PC-9 (cell line): ENCODE measurements at regions of chr5 and their contacts with region 1.

Region 1: DNA sequence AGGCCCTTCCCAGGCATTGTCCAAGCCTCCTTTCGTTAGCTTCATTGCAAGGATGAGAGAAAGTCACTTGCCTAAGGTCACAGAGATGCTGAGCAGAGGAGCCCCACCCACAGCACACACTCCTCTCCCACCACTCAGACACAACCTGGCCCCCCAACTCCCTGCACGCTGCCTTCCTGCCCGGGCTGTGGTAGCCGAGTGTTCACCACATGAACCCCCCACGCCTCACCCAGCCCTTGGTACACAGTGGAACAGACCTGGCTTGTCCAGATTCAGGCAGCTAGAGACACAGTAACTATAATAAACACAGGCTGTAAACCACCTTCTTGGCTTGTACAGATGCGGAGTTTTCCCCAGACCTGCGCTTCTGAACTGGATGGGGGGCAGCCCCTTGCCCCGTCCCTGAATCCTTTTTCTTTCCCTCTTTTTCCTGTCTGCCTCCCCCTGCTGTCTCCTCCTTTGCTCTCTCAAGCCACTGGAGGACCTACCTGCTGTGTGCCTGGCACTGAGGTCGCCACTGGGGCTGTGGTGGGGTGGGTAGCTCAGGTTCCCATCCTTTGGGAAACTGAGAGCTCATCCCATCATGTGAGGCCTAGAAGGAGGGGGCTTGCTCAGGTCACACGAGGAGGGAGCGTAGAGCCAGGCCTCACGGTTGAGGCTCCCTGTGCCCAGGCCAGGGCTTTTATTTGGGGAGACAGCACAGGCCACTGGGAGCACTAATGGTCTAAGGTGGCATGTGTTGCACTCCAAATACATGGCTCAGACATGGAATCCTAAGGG is 55.7 kb upstream of the SYNPO start:
- DNase-seq: no peak
- H3K4me3 ChIP-seq: no peak overlapping the region
- H3K27ac ChIP-seq: no peak overlapping the region
- H3K4me1 ChIP-seq: no peaks in the 10 kb centered on the region
- H3K27me3 ChIP-seq: peaks cover 14% of the 10 kb centered on the region
- CTCF ChIP-seq: no peak

Region 2: GRCh38 chr5:150599917-150600499 is 15.3 kb after region 1 on chr5:
- CTCF ChIA-PET with region 1: no interaction called
- POLR2A ChIA-PET with region 1: no interaction called
- intact Hi-C with region 1: no loop called
- DNase-seq: peak in 1 of 2 experiments; percentile 69
- H3K4me3 ChIP-seq: no peak overlapping the region
- H3K27ac ChIP-seq: no peak overlapping the region
- H3K4me1 ChIP-seq: no peaks in the 10 kb centered on the region
- H3K27me3 ChIP-seq: no peaks in the 10 kb centered on the region
- CTCF ChIP-seq: no peak

Region 3: DNA sequence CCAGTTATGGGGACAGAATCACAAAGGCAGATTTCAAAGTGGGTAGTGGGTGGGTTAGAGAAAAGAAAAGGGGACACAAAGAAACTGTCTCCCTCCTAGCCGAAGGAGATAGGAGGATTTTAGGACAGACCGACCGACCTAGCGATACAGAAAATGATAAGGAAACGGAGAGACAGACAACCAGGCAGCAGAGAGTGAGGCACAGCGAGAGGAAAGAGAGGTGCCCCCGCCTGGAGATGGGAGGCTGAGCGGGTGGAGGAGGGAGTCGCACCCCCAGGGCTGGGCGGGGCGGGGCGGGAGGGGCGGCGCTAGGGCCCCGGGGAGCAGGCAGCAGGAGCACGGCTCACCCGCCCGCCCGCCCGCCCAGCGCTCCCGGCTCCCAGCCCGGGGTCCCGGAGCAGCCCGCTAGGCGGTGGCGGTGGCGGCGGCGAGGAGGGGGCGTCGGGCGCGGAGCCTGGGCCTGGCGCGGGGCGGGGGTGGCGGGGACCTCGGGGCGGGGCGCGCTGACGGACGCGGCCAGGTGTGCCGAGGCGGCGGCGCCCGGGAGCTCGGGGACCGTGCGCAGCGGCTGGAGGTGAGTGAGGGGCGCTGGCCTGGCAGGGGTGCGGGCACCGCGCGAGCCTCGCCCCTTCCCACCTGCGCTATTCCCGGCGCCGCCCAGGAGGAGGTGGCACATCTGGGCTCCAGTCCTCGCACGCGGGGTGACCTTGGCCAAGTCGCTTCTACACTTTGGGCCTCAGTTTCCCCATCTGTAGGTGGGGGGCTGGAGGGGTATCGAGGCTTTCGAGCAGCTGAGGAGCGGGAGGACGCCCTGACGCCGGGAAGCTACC is 39.8 kb after region 1 on chr5:
- CTCF ChIA-PET with region 1: no interaction called
- POLR2A ChIA-PET with region 1: interaction called, 10 read pairs
- intact Hi-C with region 1: no loop called
- DNase-seq: no peak
- H3K4me3 ChIP-seq: peak overlapping the region; percentile 45; the same call in 1 of the 2 replicates
- H3K27ac ChIP-seq: no peak overlapping the region
- H3K4me1 ChIP-seq: no peaks in the 10 kb centered on the region; the same call in 1 of the 2 replicates
- H3K27me3 ChIP-seq: peaks cover 41% of the 10 kb centered on the region
- CTCF ChIP-seq: no peak

Region 4: DNA sequence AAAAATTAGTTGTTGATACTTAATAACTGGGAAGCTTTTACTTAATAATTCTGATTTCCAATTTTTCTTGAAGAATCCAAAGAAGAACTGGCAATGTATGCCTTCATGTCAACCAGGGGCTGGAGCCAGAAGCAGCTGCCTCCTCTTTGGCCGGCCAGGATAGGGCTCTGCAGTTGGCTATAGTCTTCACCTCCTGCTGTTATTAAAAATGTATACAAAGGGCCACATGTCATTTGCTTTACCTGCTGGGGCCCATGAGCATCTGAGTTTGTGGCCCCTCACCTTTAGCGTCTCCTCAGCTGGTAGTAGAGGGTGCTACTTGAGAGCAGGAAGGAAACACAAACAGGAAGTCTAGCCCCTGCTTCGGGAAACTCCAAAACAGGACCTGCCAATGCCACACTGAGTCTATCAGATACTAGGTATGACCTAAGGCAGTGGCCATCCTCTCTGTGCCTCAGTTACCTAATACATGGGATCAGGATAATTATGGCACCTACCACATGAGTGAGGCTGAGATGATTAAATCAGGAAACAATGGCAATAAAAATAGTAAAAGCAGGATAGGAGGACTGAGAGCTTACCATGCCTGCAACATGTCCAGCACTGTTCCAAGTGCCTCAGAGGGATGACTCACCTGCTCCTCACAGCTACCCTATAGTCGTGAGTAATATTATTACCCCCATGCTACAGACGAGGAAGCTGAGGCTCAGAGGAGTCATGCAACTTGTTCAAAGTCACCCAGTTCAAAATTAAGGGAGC is 617.8 kb after region 1 on chr5:
- CTCF ChIA-PET with region 1: no interaction called
- POLR2A ChIA-PET with region 1: no interaction called
- intact Hi-C with region 1: no loop called
- DNase-seq: no peak
- H3K4me3 ChIP-seq: no peak overlapping the region
- H3K27ac ChIP-seq: no peak overlapping the region
- H3K4me1 ChIP-seq: no peaks in the 10 kb centered on the region
- H3K27me3 ChIP-seq: no peaks in the 10 kb centered on the region
- CTCF ChIP-seq: no peak